GM10248 (cell line): ENCODE measurements at regions of chr1 and their contacts with region 1.

Region 1: GRCh38 chr1:26363549-26364448 is 8.8 kb downstream of the ZNF683 start:
- DNase-seq: peak; percentile 87
- CTCF ChIP-seq: peak; percentile 97

Region 2: GRCh38 chr1:26279456-26280332 is 84.1 kb before region 1 on chr1 and contains the start of gene SH3BGRL3:
- CTCF ChIA-PET with region 1: interaction called, 57 read pairs
- POLR2A ChIA-PET with region 1: no interaction called
- DNase-seq: peak; percentile 95
- CTCF ChIP-seq: peak; percentile 47

Region 3: DNA sequence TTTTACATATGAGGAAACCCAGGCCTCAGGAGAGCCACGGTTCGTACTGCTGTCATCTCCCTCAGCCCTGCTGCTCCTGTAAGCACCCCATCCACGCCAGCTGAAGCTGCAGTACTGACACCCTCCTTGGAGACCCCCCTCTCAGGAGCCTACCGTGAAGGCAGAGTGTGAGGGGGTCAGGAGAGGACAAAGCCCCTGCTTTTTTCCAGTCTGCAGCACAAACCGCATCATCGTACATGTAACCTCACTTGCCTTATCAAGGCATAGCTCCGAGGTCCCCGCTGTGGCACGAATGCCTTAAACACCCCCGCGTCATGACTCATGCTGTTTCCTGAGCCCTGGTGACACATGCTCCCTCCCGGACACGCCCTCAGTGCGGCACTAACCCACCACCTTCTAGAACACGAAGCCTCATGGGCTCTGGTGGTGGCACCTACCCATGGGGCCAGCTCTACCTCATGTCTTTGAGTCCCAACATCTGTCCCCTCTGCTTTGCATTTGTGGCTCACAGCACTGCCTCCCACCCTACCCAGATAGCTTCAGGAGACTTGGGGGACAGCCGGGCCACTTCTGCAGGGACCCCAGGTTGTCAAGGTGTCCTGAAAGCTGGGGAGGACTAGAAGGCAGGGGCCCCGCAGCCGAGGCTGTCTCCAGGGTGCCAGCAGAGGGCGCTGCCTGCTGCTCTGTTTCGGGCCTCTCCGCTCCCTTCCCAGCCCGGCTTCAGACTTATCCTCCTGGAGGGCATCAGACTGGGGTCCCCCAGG is 79.0 kb before region 1 on chr1:
- CTCF ChIA-PET with region 1: interaction called, 57 read pairs
- POLR2A ChIA-PET with region 1: no interaction called
- DNase-seq: peak; percentile 80
- CTCF ChIP-seq: peak; percentile 89

Region 4: DNA sequence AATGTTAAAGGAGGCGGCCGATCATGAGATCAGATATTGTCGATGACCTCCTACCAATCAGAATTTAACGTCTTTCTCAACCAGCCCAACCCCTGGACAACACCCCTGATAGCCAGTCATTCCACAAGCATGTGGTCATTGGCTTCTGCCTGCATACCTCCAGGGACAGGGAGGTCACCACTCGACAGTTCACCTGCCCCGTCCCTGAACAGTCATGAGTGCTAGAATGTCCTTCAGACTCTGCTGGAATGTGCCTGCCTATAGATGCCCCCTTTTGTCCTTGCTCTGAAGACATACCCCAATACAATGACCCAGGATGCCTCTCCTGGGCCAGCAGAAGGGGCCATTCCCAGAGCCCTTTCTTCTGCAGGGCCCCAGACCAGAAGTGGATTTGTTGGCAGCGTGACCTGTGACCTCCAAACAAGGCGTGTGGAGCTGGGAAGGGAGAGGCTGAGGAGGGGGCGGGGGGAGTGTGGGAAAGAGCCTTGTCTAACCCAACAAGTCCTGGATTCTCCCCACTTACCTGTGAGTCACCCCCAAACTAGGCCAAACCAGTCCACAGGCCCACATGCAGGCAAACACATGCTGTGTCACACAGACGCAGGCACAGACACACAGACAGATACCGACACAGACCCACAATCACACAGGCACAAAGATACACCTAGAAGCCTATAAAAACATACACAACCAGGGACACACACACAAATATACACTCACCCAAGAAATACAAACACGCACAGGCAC is 12.0 kb before region 1 on chr1:
- CTCF ChIA-PET with region 1: interaction called, 30 read pairs
- POLR2A ChIA-PET with region 1: no interaction called
- DNase-seq: no peak
- CTCF ChIP-seq: no peak

Region 5: DNA sequence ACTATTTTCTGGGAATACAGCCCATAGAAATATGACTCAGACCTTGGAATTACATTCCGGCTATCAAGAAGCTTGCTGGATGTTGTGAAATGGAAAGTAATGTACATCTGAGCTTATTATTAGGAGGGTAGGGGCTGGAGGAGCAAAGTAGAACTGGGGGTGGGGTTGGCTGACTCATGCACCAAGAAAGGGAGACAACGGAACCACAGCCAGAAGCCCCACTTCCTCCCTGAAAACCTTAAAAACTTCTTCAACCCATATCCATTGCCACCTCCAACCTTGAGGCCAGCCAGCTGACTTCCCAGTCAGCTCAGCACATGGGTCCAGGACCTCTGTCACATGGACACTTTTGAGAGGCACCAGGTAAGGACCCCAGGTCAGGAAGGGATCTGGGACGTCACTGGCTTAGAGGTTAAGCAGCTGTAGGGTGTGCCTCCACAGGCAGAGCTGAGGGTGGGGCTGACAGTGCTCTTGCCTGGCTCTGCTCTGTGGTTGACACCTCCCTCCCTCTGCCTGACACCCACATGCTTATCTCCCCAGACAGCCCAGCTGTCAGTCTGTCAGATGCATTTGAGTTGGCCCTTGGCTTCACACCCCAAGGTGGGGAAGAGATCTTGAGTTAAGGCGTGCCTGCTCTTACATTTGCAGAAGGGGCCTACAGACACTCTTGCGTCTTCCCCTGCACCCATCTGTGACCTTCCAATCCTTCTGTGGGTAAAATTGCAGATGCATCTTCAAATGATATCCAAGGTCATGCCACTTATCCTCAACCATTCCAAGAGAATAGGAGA is 14.5 kb after region 1 on chr1:
- CTCF ChIA-PET with region 1: interaction called, 61 read pairs
- POLR2A ChIA-PET with region 1: no interaction called
- DNase-seq: peak; percentile 86
- CTCF ChIP-seq: no peak